ENCODE measurements at regions of chr17 and their contacts with region 1.

Region 1: DNA sequence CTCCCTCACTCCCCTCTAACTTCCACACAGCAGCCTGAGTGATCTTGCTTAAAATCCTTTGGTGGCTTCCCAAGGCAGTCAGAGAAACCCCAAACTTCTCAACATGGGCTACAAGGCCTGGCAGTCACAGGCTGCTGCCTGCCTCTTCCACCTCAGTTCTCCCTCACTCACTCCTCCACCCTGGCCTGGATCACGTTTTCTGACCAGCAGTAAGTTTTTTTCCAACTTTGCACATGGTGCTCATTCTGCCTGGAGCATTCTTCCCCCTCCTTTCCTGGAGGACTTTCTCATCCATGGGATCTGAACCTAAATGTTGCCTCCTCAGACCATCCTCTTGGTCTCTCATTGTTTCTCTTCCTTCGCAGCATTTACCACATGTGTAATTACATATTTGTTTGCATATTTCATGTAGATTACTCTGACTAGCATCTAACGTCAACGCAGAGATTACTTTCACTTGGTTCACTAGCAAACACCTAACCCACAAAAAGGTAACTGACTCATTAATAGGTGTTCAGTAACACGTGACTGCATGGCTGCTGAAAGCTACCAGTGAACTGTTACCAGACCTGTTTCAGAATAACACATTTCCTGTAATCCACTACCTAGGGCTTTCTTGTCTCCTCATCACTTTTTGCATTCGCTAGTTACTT is 17.1 kb downstream of the GNA13 start:
- DNase-seq: peak; percentile 65
- H3K4me3 Mint-ChIP-seq: peak overlapping the region; percentile 60
- H3K27ac Mint-ChIP-seq: peak overlapping the region; percentile 87
- H3K4me1 Mint-ChIP-seq: peaks cover 81% of the 10 kb centered on the region
- H3K27me3 Mint-ChIP-seq: no peaks in the 10 kb centered on the region

Region 2: DNA sequence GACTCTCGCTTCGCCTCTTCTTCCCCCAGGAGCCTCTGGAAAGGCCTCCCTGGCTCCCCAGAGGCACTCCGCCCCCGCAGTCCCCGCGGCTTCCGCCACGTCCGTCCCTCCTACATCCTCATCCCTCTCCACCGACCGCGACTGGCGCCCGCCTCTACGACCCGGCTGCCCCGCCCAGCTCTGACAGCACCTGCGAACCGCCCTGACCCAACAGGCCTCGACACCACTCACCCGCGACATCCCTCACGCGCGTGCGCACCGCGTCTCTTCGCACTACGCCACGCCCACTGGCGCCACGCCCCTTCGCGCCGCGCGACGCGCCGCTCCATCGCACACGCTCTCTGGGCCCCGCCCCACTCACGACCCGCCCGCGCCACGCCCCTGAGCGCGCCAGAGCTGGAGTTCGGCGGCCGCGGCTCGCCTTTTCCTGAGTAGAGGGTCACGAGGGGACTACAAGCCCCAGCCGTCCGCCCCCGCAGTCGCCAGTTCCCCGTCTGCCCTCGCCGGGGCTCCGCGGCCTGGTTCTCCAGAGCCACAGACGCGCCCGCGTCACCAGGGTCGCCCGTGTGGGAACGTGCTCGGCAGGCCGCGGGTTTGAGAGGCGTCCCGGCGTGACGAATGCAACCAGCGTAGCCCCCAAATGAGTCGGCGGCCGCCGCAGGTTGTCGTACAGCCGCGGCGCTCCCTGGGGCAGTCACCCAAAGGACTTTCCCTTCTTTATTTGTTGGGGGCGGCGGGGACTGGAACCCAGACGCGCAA is 64.0 kb before region 1 on chr17:
- CTCF ChIA-PET with region 1: interaction called, 3 read pairs
- POLR2A ChIA-PET with region 1: interaction called, 17 read pairs
- intact Hi-C with region 1: loop called (anchors 2 kb)
- DNase-seq: peak; percentile 97
- H3K4me3 Mint-ChIP-seq: peak overlapping the region; percentile 82
- H3K27ac Mint-ChIP-seq: peak overlapping the region; percentile 100
- H3K4me1 Mint-ChIP-seq: peaks cover 55% of the 10 kb centered on the region
- H3K27me3 Mint-ChIP-seq: no peaks in the 10 kb centered on the region

Region 3: DNA sequence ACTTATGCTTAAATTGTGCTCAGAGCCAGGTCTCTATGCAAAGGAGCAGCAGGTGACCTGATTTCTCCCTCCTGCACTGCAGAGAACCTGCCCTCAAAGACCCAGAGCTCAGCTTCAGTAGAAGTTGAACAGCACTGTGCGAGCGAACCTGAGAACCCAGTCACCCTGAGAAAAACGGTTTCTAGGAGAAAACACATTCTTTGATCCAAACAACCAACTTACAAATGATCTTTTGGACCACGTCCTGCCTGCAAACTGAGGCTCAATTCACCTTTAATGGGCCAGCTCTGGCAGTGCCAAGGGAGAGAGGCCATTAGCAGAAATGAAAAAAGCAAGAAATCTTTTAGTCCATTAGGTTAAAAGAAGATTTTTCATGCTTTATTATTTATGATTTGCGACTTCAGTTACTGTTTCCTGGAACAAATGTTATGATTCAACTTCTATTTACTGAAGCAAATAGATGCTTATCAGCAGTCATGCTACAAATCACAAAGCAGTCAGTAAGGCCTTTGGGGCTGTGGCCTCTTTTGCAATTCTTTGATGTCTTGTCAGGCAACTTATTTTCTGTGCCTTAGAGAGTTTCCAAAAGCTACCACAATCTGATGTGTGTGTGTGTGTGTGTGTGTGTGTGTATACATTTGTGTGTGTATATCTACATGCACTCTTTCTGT is 54.5 kb before region 1 on chr17:
- CTCF ChIA-PET with region 1: no interaction called
- POLR2A ChIA-PET with region 1: interaction called, 6 read pairs
- intact Hi-C with region 1: loop called (anchors 1 kb)
- DNase-seq: peak; percentile 70
- H3K4me3 Mint-ChIP-seq: peak overlapping the region; percentile 75
- H3K27ac Mint-ChIP-seq: peak overlapping the region; percentile 97
- H3K4me1 Mint-ChIP-seq: peaks cover 48% of the 10 kb centered on the region
- H3K27me3 Mint-ChIP-seq: no peaks in the 10 kb centered on the region

Region 4: DNA sequence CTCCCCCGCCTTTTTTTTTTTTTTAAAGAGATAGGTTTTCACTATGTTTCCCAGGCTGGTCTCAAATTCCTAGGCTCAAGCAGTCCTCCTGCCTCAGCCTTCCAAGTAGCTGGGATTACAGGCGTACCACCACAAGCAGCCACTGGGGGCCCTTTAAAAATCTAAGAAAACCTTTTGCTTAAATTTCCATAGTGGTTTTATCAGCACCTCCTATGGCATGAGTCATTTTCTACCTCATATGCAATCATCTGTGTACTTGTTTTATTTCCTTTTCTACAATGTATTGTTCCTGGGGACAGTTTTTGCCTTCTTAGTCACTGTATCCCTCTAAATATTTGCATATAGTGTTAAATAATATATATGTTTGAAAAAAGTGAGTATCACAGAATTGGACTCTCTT is 12.2 kb before region 1 on chr17:
- CTCF ChIA-PET with region 1: interaction called, 7 read pairs
- POLR2A ChIA-PET with region 1: interaction called, 9 read pairs
- intact Hi-C with region 1: loop called (anchors 1 kb)
- DNase-seq: peak; percentile 75
- H3K4me3 Mint-ChIP-seq: peak overlapping the region; percentile 62
- H3K27ac Mint-ChIP-seq: peak overlapping the region; percentile 96
- H3K4me1 Mint-ChIP-seq: peaks cover 83% of the 10 kb centered on the region
- H3K27me3 Mint-ChIP-seq: no peaks in the 10 kb centered on the region